ENCODE measurements at regions of chr16 and their contacts with region 1.

Region 1: GRCh38 chr16:53266156-53266555 is 168.1 kb upstream of the RBL2 start:
- DNase-seq: no peak
- ATAC-seq: no peak
- H3K4me3 ChIP-seq: no peak overlapping the region
- H3K27ac ChIP-seq: no peak overlapping the region
- H3K4me1 ChIP-seq: no peaks in the 10 kb centered on the region
- CTCF ChIP-seq: no peak
- EP300 ChIP-seq: no peak
- POLR2A ChIP-seq: no peak
- RAD21 ChIP-seq: no peak

Region 2: DNA sequence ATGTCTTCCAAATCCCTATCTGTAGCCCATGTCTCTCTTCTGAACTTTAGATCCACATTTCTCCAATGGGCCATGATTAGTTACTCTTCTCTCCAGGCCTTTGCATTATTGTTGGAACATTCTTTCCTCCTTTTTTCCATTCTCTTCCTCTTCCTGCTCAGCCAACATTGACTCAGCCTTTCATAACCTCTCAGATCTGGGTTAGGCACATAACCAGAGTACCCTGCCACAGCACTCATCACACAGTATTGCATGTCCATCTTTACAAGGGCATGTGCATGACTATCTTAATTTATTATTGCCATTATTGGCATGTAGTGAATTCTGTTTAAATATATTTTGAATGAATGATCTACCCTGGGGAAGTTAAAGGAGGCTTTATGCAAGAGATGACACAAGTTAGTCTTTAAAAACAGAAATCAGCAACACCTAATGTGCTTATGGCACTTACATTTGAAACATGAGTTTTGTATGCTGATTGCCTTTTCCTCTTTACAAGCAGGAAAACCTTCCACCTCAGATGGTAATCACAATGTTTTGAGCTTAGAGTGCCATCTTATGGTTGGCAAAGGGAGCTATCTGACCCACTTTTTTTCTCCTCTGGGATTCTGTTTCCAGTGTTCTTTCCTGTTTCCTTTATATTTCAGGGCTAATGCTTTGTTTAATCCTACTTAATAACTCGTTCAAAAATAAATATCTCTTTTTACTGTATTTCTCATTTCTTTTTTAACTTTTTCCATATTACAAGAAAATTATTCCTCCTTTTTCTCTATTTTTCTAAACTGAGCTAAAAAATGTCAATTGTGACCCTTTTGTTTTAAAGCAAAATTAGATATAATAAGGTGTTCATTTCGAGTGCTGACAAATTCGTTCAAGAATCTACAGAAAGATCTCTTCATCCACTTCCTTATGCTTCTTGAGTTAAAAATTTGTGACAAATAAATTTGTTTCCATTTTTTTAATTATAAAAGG is 17.1 kb after region 1 on chr16:
- CTCF ChIA-PET with region 1: interaction called, 10 read pairs
- POLR2A ChIA-PET with region 1: no interaction called
- DNase-seq: peak; percentile 58 to 65
- ATAC-seq: peak; percentile 83 to 84
- H3K4me3 ChIP-seq: no peak overlapping the region
- H3K27ac ChIP-seq: no peak overlapping the region
- H3K4me1 ChIP-seq: no peaks in the 10 kb centered on the region
- CTCF ChIP-seq: peak; percentile 68
- EP300 ChIP-seq: no peak
- POLR2A ChIP-seq: no peak
- RAD21 ChIP-seq: peak; percentile 62 to 66